A673 (cell line): ENCODE measurements at regions of chr20 and their contacts with region 1.

Region 1: DNA sequence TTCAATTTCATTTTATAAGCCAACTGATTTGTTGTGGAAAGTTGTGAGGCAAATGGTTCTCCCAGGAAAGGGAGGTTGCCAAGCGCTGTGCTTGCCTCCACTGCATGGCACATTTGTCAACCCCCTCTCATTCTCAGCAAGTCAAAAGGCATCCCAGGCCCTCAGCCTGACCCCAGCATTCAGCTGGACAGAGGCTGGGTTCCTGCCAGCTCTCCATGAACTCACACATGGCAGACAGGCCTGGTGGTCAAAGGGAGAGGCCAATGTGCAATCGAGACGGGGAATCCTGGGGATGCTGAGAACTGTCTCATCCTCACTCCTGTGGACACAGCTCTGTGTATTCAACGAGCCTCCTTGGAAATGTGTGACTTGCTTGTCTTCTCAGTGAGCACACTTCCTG is 106.0 kb upstream of the CDH4 start:
- DNase-seq: no peak
- H3K4me3 ChIP-seq: no peak overlapping the region
- H3K27ac ChIP-seq: no peak overlapping the region
- H3K4me1 ChIP-seq: no peaks in the 10 kb centered on the region
- H3K27me3 ChIP-seq: peaks cover 17% of the 10 kb centered on the region
- CTCF ChIP-seq: no peak

Region 2: DNA sequence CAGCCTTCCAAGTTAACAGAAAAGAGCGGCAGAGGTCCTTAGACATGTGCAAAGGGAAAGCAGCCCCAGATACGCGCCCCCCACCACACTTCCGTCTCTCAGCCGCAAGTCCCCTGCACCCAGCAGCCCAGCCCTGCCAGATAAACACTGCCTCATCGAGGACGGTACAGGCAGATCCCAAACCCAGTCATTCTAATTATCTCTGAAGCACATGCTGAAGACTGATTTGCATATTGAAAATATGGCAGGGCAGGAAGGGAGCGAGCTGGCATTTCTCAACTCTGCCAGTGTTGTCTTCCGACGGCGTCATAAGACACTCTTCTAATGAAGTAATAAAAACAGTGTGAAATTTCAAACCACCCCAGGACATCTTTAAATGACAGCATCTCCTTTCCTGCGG is 16.7 kb before region 1 on chr20:
- CTCF ChIA-PET with region 1: no interaction called
- POLR2A ChIA-PET with region 1: interaction called, 20 read pairs
- intact Hi-C with region 1: no loop called
- DNase-seq: peak; percentile 41
- H3K4me3 ChIP-seq: no peak overlapping the region
- H3K27ac ChIP-seq: no peak overlapping the region
- H3K4me1 ChIP-seq: no peaks in the 10 kb centered on the region
- H3K27me3 ChIP-seq: peaks cover 25% of the 10 kb centered on the region
- CTCF ChIP-seq: no peak

Region 3: DNA sequence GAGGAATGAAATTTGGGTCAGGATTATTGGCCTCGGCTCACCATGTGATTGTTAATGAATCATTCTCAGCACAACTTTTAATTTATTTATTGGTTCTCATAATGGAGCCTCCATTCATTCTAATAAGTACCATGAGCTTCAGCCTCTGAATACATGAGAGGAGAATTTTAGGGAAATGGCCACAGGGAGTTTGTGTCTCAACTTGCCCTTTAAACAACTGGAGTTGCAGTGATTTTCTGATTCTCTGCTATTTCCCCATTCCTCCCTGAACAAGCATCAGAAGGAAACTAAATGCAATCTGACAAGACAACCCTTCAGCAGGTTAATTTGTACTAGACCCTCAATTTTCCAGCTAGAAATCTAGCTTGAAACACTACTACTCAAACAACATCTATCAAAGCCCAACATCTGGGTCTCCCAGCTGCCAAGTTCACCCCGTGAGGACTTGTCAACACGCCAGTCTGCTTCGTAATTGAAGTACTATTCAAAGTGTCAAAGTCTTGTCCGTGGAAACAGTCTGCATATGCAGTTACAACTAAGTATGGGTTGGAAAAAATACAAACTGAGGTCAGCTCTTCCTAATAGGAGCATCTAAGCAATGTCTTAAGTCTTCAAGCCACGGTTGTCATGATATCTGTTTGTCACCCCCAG is 341.4 kb after region 1 on chr20:
- CTCF ChIA-PET with region 1: no interaction called
- POLR2A ChIA-PET with region 1: no interaction called
- intact Hi-C with region 1: no loop called
- DNase-seq: no peak
- H3K4me3 ChIP-seq: no peak overlapping the region
- H3K27ac ChIP-seq: no peak overlapping the region
- H3K4me1 ChIP-seq: no peaks in the 10 kb centered on the region
- H3K27me3 ChIP-seq: peaks cover 8% of the 10 kb centered on the region
- CTCF ChIP-seq: no peak